CD14-positive monocyte (primary cell): ENCODE measurements at regions of chr1 and their contacts with region 1.

Region 1: GRCh38 chr1:96236156-96236739 is 485.3 kb upstream of the PTBP2 start:
- DNase-seq: peak; percentile 7 to 35 (median 17)
- H3K4me3 ChIP-seq: no peak overlapping the region
- H3K4me3 Mint-ChIP-seq: no peak overlapping the region
- H3K27ac ChIP-seq: no peak overlapping the region
- H3K27ac Mint-ChIP-seq: no peak overlapping the region
- H3K4me1 ChIP-seq: no peaks in the 10 kb centered on the region
- H3K4me1 Mint-ChIP-seq: no peaks in the 10 kb centered on the region
- H3K27me3 ChIP-seq: no peaks in the 10 kb centered on the region
- H3K27me3 Mint-ChIP-seq: peaks cover 0 to 3% (median 1%) of the 10 kb centered on the region in 3 donors
- CTCF ChIP-seq: peak; percentile 58

Region 2: GRCh38 chr1:96845464-96845863 is 609.2 kb after region 1 on chr1:
- intact Hi-C with region 1: loop called (anchors 5 to 10 kb)
- DNase-seq: peak in 1 of 3 donors; percentile 13
- H3K4me3 ChIP-seq: no peak overlapping the region
- H3K4me3 Mint-ChIP-seq: no peak overlapping the region
- H3K27ac ChIP-seq: no peak overlapping the region
- H3K27ac Mint-ChIP-seq: no peak overlapping the region
- H3K4me1 ChIP-seq: no peaks in the 10 kb centered on the region
- H3K4me1 Mint-ChIP-seq: peaks cover 9% of the 10 kb centered on the region
- H3K27me3 ChIP-seq: no peaks in the 10 kb centered on the region
- H3K27me3 Mint-ChIP-seq: peaks cover 0 to 2% (median 0%) of the 10 kb centered on the region in 3 donors
- CTCF ChIP-seq: peak; percentile 59